ENCODE measurements at regions of chr4 and their contacts with region 1.

Region 1: DNA sequence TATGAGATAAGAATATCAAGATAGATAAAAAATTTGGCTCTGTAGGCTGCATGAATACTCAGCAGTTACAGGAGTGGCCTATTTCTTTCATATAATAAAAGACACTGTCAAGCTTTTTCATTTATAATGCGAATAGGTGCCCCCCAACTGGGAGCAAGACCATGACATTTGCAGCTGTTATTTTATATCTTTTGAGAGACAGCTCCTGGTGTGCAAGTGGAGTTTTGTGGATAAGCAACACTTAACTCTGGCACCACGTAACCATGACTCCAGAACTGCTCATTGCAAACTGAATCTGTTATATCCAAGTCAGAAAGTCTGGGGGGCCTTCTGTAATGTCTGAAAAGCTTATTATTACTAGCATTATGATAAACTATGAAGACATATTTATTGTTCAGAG is 1372.4 kb downstream of the C4orf33 start:
- DNase-seq: no peak
- ATAC-seq: no peak
- H3K4me3 ChIP-seq: no peak overlapping the region
- H3K27ac ChIP-seq: no peak overlapping the region
- H3K4me1 ChIP-seq: no peaks in the 10 kb centered on the region
- H3K27me3 ChIP-seq: no peaks in the 10 kb centered on the region
- CTCF ChIP-seq: no peak
- POLR2A ChIP-seq: no peak

Region 2: GRCh38 chr4:130478406-130478805 is 10.1 kb after region 1 on chr4:
- in situ Hi-C with region 1: no loop called
- intact Hi-C with region 1: no loop called
- DNase-seq: no peak
- ATAC-seq: no peak
- H3K4me3 ChIP-seq: no peak overlapping the region
- H3K27ac ChIP-seq: no peak overlapping the region
- H3K4me1 ChIP-seq: no peaks in the 10 kb centered on the region
- H3K27me3 ChIP-seq: no peaks in the 10 kb centered on the region
- CTCF ChIP-seq: no peak
- POLR2A ChIP-seq: no peak

Region 3: DNA sequence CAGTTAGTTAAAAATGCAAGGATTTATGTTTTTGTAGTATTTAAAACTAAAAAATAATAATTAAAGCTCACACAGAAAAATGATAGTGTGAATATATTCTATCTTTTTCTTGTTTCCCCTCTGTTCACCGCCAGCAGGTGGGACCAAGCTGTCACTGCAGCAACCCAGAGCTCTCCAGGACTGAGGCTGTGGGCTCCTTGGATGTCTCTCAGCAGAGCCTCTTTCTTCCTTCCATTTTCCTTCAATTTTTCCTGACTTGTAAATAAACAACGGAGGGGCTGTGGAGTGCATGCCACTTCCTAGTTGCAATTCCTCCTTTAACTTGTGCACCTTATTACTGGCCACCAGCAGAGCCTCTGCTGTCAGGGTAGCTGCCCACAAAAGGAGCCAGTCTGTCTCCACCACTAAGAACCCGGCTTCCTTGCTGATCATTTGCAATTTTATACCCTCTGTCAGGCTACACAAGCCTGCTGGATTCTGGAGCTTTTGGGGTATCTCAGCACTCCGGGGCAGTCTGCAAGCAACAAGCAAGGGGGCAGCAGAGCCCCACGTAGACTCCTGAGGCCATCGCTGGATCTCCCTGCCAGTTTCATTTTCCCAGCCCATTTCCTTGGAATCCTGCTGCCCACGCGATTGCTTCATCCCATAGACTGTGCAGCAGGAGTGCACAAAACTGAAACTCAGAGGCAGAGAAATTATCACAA is 95.0 kb after region 1 on chr4:
- in situ Hi-C with region 1: loop called in 1 of 4 experiments (anchors 25 kb)
- intact Hi-C with region 1: no loop called
- DNase-seq: no peak
- ATAC-seq: no peak
- H3K4me3 ChIP-seq: peak overlapping the region in 2 of 4 donors; percentile 10 to 23
- H3K27ac ChIP-seq: no peak overlapping the region
- H3K4me1 ChIP-seq: no peaks in the 10 kb centered on the region
- H3K27me3 ChIP-seq: no peaks in the 10 kb centered on the region
- CTCF ChIP-seq: no peak
- POLR2A ChIP-seq: no peak

Measured in gastrocnemius medialis (tissue), 4 donors.